GM10248 (cell line): ENCODE measurements at regions of chrX and their contacts with region 1.

Region 1: DNA sequence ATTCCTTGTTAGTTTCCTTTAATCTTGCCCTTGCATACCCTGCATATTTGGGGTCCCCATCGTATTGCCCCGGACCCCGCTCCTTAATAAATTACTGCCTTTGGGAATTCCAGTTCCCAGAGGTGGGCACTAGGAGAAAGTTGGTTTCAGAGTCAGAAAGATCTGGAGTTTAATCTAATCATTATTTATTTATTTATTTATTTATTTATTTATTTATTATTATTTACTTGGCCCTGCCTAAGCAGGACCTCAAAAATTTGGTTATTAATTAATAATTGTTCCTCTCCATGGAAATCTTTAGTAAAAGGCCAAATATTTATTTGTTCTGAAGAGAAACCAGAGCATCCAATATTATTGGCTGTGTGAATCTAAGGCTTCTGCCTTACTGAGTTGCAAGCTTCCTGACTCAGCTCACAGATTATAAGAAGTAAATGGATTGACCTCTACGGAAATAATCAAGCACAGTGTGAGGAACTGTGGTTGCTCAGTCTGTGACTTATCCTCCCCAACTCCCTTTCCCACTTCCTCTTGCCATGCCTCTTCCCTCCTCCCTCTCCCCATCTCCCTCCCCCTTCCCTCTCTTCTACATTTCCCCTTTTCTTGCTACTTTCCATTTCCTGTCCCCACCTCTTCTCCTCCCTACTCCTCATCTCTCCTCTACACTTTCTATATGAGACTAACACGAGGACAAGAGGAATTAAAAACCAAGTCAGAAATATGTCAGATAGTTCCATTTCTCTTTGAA is 61.5 kb upstream of the AP1S2 start:
- DNase-seq: no peak
- CTCF ChIP-seq: no peak

Region 2: DNA sequence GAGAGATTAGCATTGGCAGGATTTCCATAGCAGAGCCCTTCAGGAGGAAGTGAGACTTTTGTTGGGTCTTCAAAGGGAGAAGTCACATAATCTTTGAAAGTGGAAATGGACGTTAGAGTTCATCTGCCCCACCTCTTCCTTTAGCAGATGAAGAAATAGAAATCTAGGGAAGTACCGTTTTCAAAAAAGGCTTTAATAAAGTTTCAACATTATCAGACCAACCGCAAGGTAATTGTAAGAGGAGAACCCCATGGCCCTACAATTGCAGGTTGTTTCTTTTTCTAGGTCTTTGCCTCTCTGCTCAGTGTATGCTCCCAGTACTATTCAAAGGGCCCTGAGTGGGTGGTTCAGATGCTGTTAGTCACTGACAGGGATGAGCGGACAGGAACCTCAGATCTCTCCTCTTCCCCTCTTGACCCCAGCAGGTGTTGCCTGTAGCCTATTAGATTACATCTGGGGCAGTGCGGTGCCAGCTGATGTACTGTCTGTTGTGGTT is 12.9 kb before region 1 on chrX:
- CTCF ChIA-PET with region 1: no interaction called
- POLR2A ChIA-PET with region 1: no interaction called
- DNase-seq: peak; percentile 58
- CTCF ChIP-seq: no peak

Region 3: GRCh38 chrX:15930585-15930984 is 14.5 kb after region 1 on chrX:
- CTCF ChIA-PET with region 1: interaction called, 10 read pairs
- POLR2A ChIA-PET with region 1: no interaction called
- DNase-seq: peak; percentile 25
- CTCF ChIP-seq: peak; percentile 25